Breast epithelium (tissue), 4 donors: ENCODE measurements at regions of chr9 and their contacts with region 1.

Region 1: DNA sequence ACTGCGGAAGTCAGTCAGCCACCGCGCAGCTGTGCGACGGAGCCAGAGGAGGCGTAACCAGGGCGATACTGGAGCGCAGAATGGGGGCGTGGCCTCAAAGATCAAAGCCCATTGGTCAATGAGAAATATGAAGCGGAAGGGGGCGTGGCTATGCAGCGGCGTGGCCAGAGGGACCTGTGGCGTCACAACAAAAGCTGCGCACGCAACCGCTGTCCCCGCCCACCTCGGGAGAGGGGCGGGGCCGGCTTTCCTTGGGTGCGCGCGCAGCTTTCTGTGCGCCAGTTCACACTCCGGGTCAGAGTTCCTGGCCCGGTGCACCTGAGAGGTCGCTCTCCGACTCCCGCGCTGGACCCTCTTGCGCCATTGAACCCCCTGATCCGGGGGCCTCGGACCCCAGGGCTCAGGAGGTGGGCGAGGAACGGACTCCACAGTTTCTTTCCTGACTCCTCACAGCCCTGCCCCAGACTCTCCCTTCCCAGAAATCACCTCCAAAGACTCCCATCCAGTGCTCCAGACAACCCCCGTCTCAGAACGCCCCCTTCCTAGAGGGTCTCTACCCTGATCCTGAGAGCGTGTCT is at the starts of genes GOLGA2 and SWI5:
- DNase-seq: peak; percentile 99 to 100
- H3K4me3 ChIP-seq: peak within 1 kb of the TSS; percentile 76 to 95 (median 94)
- H3K27ac ChIP-seq: peak within 1 kb of the TSS; percentile 95 to 97
- H3K4me1 ChIP-seq: peaks cover 0 to 10% of the 10 kb centered on the region in 2 donors
- H3K27me3 ChIP-seq: no peaks in the 10 kb centered on the region
- CTCF ChIP-seq: no peak
- POLR2A ChIP-seq: peak; percentile 98
- total RNA-seq, gene GOLGA2: 87.7 to 121 (median 97.5) TPM
- total RNA-seq, gene SWI5: 25.8 to 39.7 (median 31.4) TPM

Region 2: GRCh38 chr9:127244609-127245601 is 1031.2 kb before region 1 on chr9:
- intact Hi-C with region 1: no loop called
- DNase-seq: peak; percentile 97 to 98
- H3K4me3 ChIP-seq: peak overlapping the region; percentile 56 to 69 (median 63)
- H3K27ac ChIP-seq: peak overlapping the region; percentile 76 to 77
- H3K4me1 ChIP-seq: no peaks in the 10 kb centered on the region
- H3K27me3 ChIP-seq: no peaks in the 10 kb centered on the region
- CTCF ChIP-seq: no peak
- POLR2A ChIP-seq: no peak

Region 3: GRCh38 chr9:128249908-128250838 is 25.9 kb before region 1 on chr9:
- intact Hi-C with region 1: no loop called
- DNase-seq: peak; percentile 91 to 93
- H3K4me3 ChIP-seq: peak overlapping the region in 2 of 3 donors; percentile 71 to 77
- H3K27ac ChIP-seq: peak overlapping the region; percentile 57 to 70
- H3K4me1 ChIP-seq: peaks cover 0 to 4% of the 10 kb centered on the region in 2 donors
- H3K27me3 ChIP-seq: no peaks in the 10 kb centered on the region
- CTCF ChIP-seq: no peak
- POLR2A ChIP-seq: no peak

Region 4: GRCh38 chr9:130226112-130226681 is 1950.1 kb after region 1 on chr9:
- intact Hi-C with region 1: loop called (anchors 5 kb)
- DNase-seq: no peak
- H3K4me3 ChIP-seq: no peak overlapping the region
- H3K27ac ChIP-seq: no peak overlapping the region
- H3K4me1 ChIP-seq: no peaks in the 10 kb centered on the region
- H3K27me3 ChIP-seq: no peaks in the 10 kb centered on the region
- CTCF ChIP-seq: no peak
- POLR2A ChIP-seq: no peak